ENCODE measurements at regions of chr5 and their contacts with region 1.

Region 1: GRCh38 chr5:150401076-150401375 is 11.7 kb downstream of the CD74 start:
- DNase-seq: no peak
- ATAC-seq: no peak
- H3K4me3 ChIP-seq: no peak overlapping the region
- H3K4me3 Mint-ChIP-seq: peak overlapping the region in 1 of 3 donors; percentile 20
- H3K27ac ChIP-seq: peak overlapping the region; percentile 29
- H3K27ac Mint-ChIP-seq: peak overlapping the region; percentile 41 to 46
- H3K4me1 ChIP-seq: peaks cover 0 to 2% of the 10 kb centered on the region in 2 experiments
- H3K4me1 Mint-ChIP-seq: peaks cover 0 to 12% (median under 1%) of the 10 kb centered on the region in 3 donors
- H3K27me3 ChIP-seq: no peaks in the 10 kb centered on the region
- H3K27me3 Mint-ChIP-seq: no peaks in the 10 kb centered on the region

Region 2: DNA sequence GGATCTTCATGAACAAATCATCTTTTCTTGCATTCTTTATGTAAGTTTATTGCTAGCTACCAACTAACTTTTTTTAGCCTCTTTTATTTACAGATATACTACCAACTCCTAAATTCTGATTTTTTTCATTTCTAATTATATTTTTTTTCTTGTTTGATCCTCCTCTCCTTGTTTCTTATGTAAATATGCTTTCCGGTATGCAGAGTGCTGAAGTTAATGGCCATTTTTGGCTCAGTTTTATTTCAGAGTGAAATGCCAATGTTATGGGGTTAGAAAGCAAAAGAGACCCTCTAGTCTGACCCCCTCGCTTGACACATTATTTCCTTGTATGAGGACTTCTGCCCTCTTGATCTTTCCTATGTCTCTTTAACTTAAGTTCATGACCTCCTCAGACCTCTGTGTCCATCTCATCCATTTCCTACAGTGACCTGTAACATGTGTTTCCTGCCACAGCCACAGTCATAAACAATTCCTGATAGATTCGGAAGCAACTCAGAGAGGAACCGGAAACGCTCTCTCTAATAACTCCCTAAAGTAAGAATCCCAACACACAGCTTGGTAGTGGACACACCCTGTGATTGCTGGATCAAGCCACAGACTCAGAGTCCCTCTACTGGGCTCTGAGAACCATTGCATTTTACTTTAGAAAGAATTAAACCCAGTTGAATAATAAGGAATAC is 1172.3 kb before region 1 on chr5:
- CTCF ChIA-PET with region 1: no interaction called
- POLR2A ChIA-PET with region 1: interaction called in 1 of 2 experiments, 18 read pairs
- DNase-seq: no peak
- ATAC-seq: no peak
- H3K4me3 ChIP-seq: no peak overlapping the region
- H3K4me3 Mint-ChIP-seq: no peak overlapping the region
- H3K27ac ChIP-seq: no peak overlapping the region
- H3K27ac Mint-ChIP-seq: no peak overlapping the region
- H3K4me1 ChIP-seq: no peaks in the 10 kb centered on the region
- H3K4me1 Mint-ChIP-seq: peaks cover 0 to 7% (median 3%) of the 10 kb centered on the region in 3 donors
- H3K27me3 ChIP-seq: peaks cover 0 to 3% of the 10 kb centered on the region in 2 experiments
- H3K27me3 Mint-ChIP-seq: peaks cover 7 to 12% of the 10 kb centered on the region in 2 donors

Measured in T-cell (primary cell).